ENCODE measurements at regions of chr10 and their contacts with region 1.

Region 1: GRCh38 chr10:119199231-119199992 is 8.0 kb upstream of the GRK5 start:
- DNase-seq: no peak
- H3K4me3 ChIP-seq: peak overlapping the region in 1 of 4 donors; percentile 18
- H3K27ac ChIP-seq: no peak overlapping the region
- H3K4me1 ChIP-seq: peaks cover 5 to 27% (median 10%) of the 10 kb centered on the region in 3 donors
- H3K27me3 ChIP-seq: peaks cover 0 to 3% (median 0%) of the 10 kb centered on the region in 4 donors
- CTCF ChIP-seq: peak; percentile 49 to 72 (median 62)
- POLR2A ChIP-seq: no peak

Region 2: GRCh38 chr10:119341459-119342301 is 142.3 kb after region 1 on chr10:
- intact Hi-C with region 1: no loop called
- DNase-seq: no peak
- H3K4me3 ChIP-seq: no peak overlapping the region
- H3K27ac ChIP-seq: peak overlapping the region in 3 of 4 donors; percentile 50 to 66 (median 53)
- H3K4me1 ChIP-seq: peaks cover 4 to 40% (median 12%) of the 10 kb centered on the region in 3 donors
- H3K27me3 ChIP-seq: no peaks in the 10 kb centered on the region
- CTCF ChIP-seq: no peak
- POLR2A ChIP-seq: no peak

Region 3: DNA sequence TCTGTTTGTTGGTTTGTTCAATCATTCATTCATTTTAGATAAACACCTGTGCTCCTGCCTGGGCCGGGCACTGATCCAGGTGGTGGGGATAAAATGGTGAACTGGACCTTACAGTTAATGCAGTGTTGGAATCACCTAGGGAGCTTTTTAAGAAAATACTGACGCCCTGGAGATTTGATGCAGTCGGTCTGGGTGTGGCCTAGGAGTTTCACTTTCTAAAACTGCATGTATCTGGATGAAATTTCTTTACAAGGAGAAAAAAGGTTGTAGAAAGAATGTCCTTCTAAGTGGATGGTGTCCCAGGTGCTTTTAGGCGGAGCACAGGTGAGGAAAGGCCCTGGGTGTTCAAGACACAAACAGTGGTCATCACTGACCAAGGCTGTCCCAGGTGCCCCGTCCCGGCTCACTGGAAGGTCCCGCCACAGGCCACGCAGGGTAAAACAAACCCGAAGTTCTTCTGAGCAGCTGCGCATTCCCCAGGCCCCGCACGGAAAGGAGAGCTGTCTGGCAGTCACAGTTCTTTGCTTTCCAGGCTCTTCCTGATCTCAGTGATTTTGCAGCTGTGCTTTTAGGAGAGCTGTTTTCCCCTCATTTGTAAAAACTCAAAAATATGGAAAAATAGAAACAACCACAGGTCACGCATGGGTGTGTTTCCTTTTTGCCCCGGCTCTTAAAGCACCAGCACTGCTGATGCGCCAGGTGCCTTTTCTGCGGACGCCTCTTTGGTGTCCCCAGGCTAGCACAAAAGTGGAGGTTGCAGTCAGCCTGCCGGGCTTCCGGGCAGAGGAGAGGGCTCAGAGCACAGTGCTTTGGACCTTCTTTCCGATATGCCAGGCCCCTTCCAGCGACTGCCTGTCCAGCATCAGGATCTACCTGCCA is 169.8 kb after region 1 on chr10:
- intact Hi-C with region 1: no loop called
- DNase-seq: no peak
- H3K4me3 ChIP-seq: peak overlapping the region in 1 of 4 donors; percentile 37
- H3K27ac ChIP-seq: peak overlapping the region; percentile 62 to 89 (median 80)
- H3K4me1 ChIP-seq: peaks cover 17 to 78% (median 35%) of the 10 kb centered on the region in 3 donors
- H3K27me3 ChIP-seq: no peaks in the 10 kb centered on the region
- CTCF ChIP-seq: no peak
- POLR2A ChIP-seq: no peak

Region 4: GRCh38 chr10:119416855-119417254 is 217.4 kb after region 1 on chr10:
- intact Hi-C with region 1: no loop called
- DNase-seq: no peak
- H3K4me3 ChIP-seq: no peak overlapping the region
- H3K27ac ChIP-seq: peak overlapping the region in 1 of 4 donors; percentile 31
- H3K4me1 ChIP-seq: peaks cover 8 to 47% (median 31%) of the 10 kb centered on the region in 3 donors
- H3K27me3 ChIP-seq: no peaks in the 10 kb centered on the region
- CTCF ChIP-seq: peak; percentile 39 to 88 (median 78)
- POLR2A ChIP-seq: no peak

Region 5: GRCh38 chr10:119445311-119445934 is 246.0 kb after region 1 on chr10:
- intact Hi-C with region 1: loop called (anchors 5 kb)
- DNase-seq: peak; percentile 11
- H3K4me3 ChIP-seq: no peak overlapping the region
- H3K27ac ChIP-seq: peak overlapping the region in 2 of 4 donors; percentile 6 to 9
- H3K4me1 ChIP-seq: peaks cover 7 to 65% (median 14%) of the 10 kb centered on the region in 3 donors
- H3K27me3 ChIP-seq: no peaks in the 10 kb centered on the region
- CTCF ChIP-seq: peak; percentile 88 to 99 (median 92)
- POLR2A ChIP-seq: no peak

Region 6: GRCh38 chr10:119588071-119588470 is 388.7 kb after region 1 on chr10:
- intact Hi-C with region 1: no loop called
- DNase-seq: no peak
- H3K4me3 ChIP-seq: no peak overlapping the region
- H3K27ac ChIP-seq: no peak overlapping the region
- H3K4me1 ChIP-seq: peaks cover 8 to 25% (median 16%) of the 10 kb centered on the region in 3 donors
- H3K27me3 ChIP-seq: no peaks in the 10 kb centered on the region
- CTCF ChIP-seq: no peak
- POLR2A ChIP-seq: no peak